Tibial artery (tissue), 4 donors: ENCODE measurements at regions of chr19 and their contacts with region 1.

Region 1: GRCh38 chr19:49968279-49968922 is 7.4 kb upstream of the SIGLEC11 start:
- DNase-seq: no peak
- H3K4me3 ChIP-seq: no peak overlapping the region
- H3K27ac ChIP-seq: no peak overlapping the region
- H3K4me1 ChIP-seq: no peaks in the 10 kb centered on the region
- H3K27me3 ChIP-seq: peaks cover 0 to 22% of the 10 kb centered on the region in 2 donors
- CTCF ChIP-seq: no peak

Region 2: DNA sequence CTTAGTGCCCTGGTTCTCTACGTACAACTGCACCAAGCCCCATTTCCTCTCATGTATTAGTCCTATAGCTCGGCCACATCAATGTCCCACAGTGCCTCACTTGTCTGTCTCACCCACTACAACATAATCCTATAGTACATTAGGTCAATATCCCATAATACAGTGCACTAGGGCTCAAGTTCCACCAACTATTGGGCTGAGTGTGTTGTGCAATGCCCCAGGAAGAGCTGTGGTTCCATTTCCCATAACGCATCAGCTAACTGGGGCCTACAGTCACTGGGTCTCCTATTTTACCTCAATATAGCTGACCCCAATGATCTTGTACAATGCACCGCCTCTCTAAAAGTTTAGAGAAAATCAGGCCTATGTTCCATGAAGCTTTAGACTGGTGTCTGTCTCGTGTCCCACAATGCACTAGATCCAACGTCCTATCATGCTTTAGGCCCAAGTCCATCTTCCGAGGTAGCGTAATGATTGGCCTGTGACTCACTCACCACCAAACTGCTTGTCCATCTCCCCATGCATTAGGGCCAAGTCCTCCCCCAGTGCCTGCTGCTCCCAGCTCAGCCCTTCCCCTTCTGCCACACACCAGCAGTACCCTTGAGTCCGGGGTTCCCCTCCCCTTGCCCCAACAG is 227.1 kb before region 1 on chr19:
- intact Hi-C with region 1: no loop called
- DNase-seq: no peak
- H3K4me3 ChIP-seq: no peak overlapping the region
- H3K27ac ChIP-seq: no peak overlapping the region
- H3K4me1 ChIP-seq: no peaks in the 10 kb centered on the region
- H3K27me3 ChIP-seq: peaks cover 0 to 10% of the 10 kb centered on the region in 2 donors
- CTCF ChIP-seq: no peak

Region 3: DNA sequence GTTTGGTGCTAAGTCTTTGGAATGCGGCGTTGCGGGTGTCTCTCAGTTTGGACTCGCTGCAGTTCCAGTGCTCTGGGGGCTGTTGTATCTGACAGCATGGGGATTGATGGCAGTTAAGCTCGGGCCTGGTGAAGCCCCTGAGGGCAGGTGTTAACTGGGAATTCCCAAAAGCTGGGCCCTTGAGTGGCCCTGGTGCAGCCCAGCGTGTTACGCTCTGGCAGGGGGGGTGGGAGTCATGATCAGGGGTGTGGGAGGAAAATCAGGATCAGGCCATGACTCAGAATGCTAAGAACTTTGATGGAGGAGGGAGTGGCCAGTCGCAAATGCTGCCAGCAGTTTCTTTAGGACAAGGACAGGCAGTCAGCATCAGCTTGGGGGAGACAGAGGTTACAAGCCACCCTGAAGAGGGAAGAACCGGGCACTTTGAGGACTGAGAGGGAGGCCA is 182.0 kb before region 1 on chr19:
- intact Hi-C with region 1: no loop called
- DNase-seq: peak; percentile 51 to 69
- H3K4me3 ChIP-seq: no peak overlapping the region
- H3K27ac ChIP-seq: peak overlapping the region; percentile 2 to 5
- H3K4me1 ChIP-seq: peaks cover 0 to 4% (median 0%) of the 10 kb centered on the region in 4 donors
- H3K27me3 ChIP-seq: no peaks in the 10 kb centered on the region
- CTCF ChIP-seq: no peak

Region 4: DNA sequence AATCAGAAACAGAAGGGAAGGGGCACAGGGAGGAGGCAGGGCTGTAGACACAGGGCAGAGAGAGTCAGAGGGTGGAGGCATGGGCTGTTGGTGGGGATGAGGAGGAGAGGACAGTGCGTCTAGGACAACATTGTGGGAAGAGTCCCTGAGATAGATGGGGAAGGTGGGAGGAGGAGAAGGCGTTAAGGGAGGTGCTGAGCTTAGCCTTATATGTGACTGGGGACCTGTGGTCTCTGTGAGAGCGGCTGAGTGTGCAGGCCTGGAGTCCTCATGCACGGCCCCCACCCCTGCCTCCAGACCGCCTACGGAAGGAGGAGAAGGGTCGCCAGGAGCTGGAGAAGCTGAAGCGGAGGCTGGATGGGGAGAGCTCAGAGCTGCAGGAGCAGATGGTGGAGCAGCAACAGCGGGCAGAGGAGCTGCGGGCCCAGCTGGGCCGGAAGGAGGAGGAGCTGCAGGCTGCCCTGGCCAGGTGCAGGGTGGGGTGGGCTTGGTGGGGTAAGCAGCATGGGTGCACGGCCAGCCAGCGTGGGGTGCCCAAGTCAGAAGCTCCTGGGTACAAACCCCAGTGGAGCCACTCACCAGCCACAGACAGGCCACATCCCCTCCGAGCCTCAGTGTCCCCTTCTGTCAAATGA is 304.0 kb after region 1 on chr19:
- intact Hi-C with region 1: loop called (anchors 5 kb)
- DNase-seq: no peak
- H3K4me3 ChIP-seq: no peak overlapping the region
- H3K27ac ChIP-seq: no peak overlapping the region
- H3K4me1 ChIP-seq: no peaks in the 10 kb centered on the region
- H3K27me3 ChIP-seq: peaks cover 0 to 16% of the 10 kb centered on the region in 2 donors
- CTCF ChIP-seq: no peak